ENCODE measurements at regions of chr3 and their contacts with region 1.

Region 1: GRCh38 chr3:37214076-37214475 is 39.7 kb upstream of the LRRFIP2 start:
- DNase-seq: no peak
- H3K4me3 ChIP-seq: no peak overlapping the region
- H3K27ac ChIP-seq: no peak overlapping the region
- H3K27me3 ChIP-seq: no peaks in the 10 kb centered on the region
- CTCF ChIP-seq: no peak

Region 2: GRCh38 chr3:37024092-37024491 is 190.0 kb before region 1 on chr3:
- CTCF ChIA-PET with region 1: interaction called, 29 read pairs
- POLR2A ChIA-PET with region 1: no interaction called
- DNase-seq: no peak
- H3K4me3 ChIP-seq: no peak overlapping the region
- H3K27ac ChIP-seq: no peak overlapping the region
- H3K27me3 ChIP-seq: no peaks in the 10 kb centered on the region
- CTCF ChIP-seq: peak; percentile 51

Measured in AG04450 (cell line).